PC-9 (cell line): ENCODE measurements at regions of chr11 and their contacts with region 1.

Region 1: DNA sequence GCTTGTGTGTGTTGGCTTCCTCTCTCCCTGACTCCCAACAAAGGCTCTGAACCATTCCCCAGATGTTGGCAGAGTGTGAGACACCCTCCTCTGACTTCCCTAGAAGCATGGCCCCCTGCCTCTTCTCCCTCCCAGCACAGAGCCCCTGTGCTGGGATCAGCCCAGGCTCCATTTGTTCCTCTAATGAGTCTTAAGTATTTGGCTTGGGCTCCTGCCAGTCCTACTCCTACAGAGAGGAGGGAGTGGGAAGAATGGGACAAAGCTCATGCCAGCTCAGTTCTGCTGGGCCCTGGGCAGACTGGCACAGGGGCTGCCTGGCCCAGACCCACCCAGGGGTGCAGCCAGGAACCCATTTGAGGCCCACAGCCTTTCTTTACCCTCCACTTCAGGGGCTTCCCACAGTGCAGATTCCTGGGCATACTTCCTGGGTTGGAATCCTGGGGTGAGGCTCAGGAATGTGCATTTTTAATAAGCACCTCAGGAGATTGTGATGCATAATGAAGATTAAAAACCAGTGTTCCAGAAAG is 30.1 kb downstream of the TNKS1BP1 start:
- DNase-seq: peak; percentile 57 to 68
- H3K4me3 ChIP-seq: no peak overlapping the region
- H3K27ac ChIP-seq: peak overlapping the region; percentile 89
- H3K4me1 ChIP-seq: peaks cover 40% of the 10 kb centered on the region
- H3K27me3 ChIP-seq: no peaks in the 10 kb centered on the region
- CTCF ChIP-seq: no peak

Region 2: GRCh38 chr11:56906683-56907148 is 388.0 kb before region 1 on chr11:
- CTCF ChIA-PET with region 1: no interaction called
- POLR2A ChIA-PET with region 1: no interaction called
- intact Hi-C with region 1: loop called (anchors 10 kb)
- DNase-seq: peak; percentile 54 to 87
- H3K4me3 ChIP-seq: peak overlapping the region; percentile 15; the same call in 1 of the 2 replicates
- H3K27ac ChIP-seq: peak overlapping the region; percentile 98
- H3K4me1 ChIP-seq: peaks cover 37% of the 10 kb centered on the region
- H3K27me3 ChIP-seq: no peaks in the 10 kb centered on the region
- CTCF ChIP-seq: no peak

Region 3: GRCh38 chr11:57277845-57278709 is 16.6 kb before region 1 on chr11:
- CTCF ChIA-PET with region 1: no interaction called
- POLR2A ChIA-PET with region 1: interaction called, 3 read pairs
- intact Hi-C with region 1: loop called (anchors 1 kb)
- DNase-seq: peak; percentile 78 to 94
- H3K4me3 ChIP-seq: peak overlapping the region; percentile 49
- H3K27ac ChIP-seq: peak overlapping the region; percentile 90
- H3K4me1 ChIP-seq: peaks cover 38% of the 10 kb centered on the region
- H3K27me3 ChIP-seq: no peaks in the 10 kb centered on the region
- CTCF ChIP-seq: peak; percentile 89

Region 4: GRCh38 chr11:57311109-57311936 is 16.7 kb after region 1 on chr11:
- CTCF ChIA-PET with region 1: no interaction called
- POLR2A ChIA-PET with region 1: interaction called, 5 read pairs
- intact Hi-C with region 1: loop called (anchors 1 kb)
- DNase-seq: peak; percentile 94 to 99
- H3K4me3 ChIP-seq: peak overlapping the region; percentile 57
- H3K27ac ChIP-seq: peak overlapping the region; percentile 67
- H3K4me1 ChIP-seq: peaks cover 54% of the 10 kb centered on the region
- H3K27me3 ChIP-seq: no peaks in the 10 kb centered on the region
- CTCF ChIP-seq: no peak